ENCODE measurements at regions of chr19 and their contacts with region 1.

Region 1: DNA sequence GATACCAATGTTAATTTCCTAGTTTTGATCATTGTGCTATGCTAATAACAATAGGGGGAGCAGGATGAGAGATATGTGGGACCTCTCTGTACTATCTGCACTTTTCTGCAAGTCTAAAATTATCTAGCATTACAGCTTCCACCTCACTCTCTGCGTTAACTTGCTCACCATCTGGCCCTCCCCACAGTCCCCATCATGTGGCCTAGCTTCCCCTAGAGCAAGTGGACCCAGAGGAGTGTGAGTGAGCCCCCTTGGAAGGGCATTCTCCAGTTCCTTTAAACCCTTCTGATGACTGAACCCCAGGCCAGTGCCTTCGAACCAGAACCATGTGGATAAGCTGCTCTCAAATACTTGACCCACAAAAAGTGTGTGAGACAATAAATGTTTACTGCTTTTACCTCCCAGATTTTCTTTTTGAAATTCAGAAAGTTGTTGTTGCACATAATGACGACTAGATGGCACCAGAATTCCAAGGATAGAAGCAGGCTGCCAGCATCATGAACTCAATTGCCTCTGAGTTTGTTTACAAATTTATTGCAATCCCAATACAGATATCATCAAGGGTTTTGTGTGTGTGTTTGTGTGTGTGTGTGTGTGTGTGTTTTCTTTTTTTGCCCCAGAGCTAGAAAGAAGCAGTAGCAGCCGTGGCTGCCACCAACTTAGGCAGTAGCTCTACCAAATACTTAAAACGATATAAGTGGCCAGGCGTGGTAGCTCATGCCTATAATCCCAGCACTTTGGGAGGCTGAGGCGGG is 49.0 kb upstream of the ZNF780A start:
- DNase-seq: no peak
- ATAC-seq: no peak
- H3K4me3 Mint-ChIP-seq: no peak overlapping the region
- H3K27ac Mint-ChIP-seq: no peak overlapping the region
- H3K4me1 Mint-ChIP-seq: peaks cover 17% of the 10 kb centered on the region
- H3K27me3 Mint-ChIP-seq: peaks cover 20% of the 10 kb centered on the region

Region 2: DNA sequence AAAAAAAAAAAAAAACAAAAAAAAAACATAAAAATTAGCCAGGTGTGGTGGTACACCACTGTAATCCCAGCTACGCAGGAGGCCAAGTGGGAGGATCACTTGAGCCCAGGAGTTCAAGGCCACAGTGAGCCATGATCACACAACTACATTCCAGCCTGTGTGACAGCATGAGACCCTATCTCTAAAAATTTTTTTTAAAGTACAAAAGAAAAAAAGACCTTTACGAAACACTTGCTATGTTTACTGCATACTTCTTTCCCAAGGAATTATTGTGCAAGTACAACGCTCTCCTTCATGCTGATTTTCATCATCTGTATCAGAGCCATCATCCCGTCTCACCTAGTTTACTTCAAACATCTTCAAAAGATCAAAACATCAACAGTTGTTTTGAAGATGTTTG is 20.3 kb before region 1 on chr19:
- CTCF ChIA-PET with region 1: no interaction called
- DNase-seq: no peak
- ATAC-seq: no peak
- H3K4me3 Mint-ChIP-seq: no peak overlapping the region
- H3K27ac Mint-ChIP-seq: no peak overlapping the region
- H3K4me1 Mint-ChIP-seq: no peaks in the 10 kb centered on the region
- H3K27me3 Mint-ChIP-seq: peaks cover 13% of the 10 kb centered on the region

Region 3: DNA sequence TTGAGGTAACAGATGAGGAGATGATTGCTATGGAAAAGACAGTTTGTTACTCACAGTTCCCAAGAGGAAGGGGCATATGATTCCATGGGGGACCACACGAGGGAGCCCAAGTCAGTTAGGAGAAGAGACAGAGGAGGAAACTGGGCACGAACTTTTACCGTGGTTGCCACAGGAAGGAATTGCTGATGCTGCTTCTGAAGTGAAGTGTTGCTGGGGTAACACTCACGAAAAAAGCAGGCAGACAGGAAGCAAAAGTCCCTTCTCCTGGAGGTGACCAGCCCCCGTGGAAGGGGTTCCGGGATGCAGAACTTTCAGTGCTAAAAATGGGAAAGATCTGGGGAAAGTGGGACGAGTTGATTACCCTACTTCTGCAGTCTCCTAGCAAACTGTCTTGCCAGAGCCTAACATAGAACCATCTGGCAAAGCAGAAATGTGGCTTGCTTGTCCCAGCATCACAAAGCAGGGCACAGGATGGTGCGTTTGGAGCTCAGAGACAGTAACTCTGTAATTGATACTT is 16.1 kb after region 1 on chr19:
- CTCF ChIA-PET with region 1: interaction called, 10 read pairs
- DNase-seq: peak; percentile 50
- ATAC-seq: peak; percentile 27
- H3K4me3 Mint-ChIP-seq: no peak overlapping the region
- H3K27ac Mint-ChIP-seq: no peak overlapping the region
- H3K4me1 Mint-ChIP-seq: peaks cover 9% of the 10 kb centered on the region
- H3K27me3 Mint-ChIP-seq: no peaks in the 10 kb centered on the region